ENCODE measurements at regions of chr1 and their contacts with region 1.

Region 1: GRCh38 chr1:28409090-28409489 is 39.5 kb downstream of the PHACTR4 start:
- DNase-seq: no peak
- ATAC-seq: no peak
- H3K4me3 ChIP-seq: no peak overlapping the region
- H3K27ac ChIP-seq: no peak overlapping the region
- H3K4me1 ChIP-seq: no peaks in the 10 kb centered on the region
- H3K27me3 ChIP-seq: no peaks in the 10 kb centered on the region
- CTCF ChIP-seq: no peak
- EP300 ChIP-seq: no peak
- POLR2A ChIP-seq: no peak
- RAD21 ChIP-seq: no peak

Region 2: GRCh38 chr1:28301471-28302174 is 107.5 kb before region 1 on chr1:
- CTCF ChIA-PET with region 1: no interaction called
- POLR2A ChIA-PET with region 1: no interaction called
- RAD21 ChIA-PET with region 1: no interaction called
- SMC1A ChIA-PET with region 1: no interaction called
- in situ Hi-C with region 1: no loop called
- intact Hi-C with region 1: no loop called
- DNase-seq: no peak
- ATAC-seq: no peak
- H3K4me3 ChIP-seq: no peak overlapping the region
- H3K27ac ChIP-seq: no peak overlapping the region
- H3K4me1 ChIP-seq: no peaks in the 10 kb centered on the region
- H3K27me3 ChIP-seq: no peaks in the 10 kb centered on the region
- CTCF ChIP-seq: no peak
- EP300 ChIP-seq: no peak
- POLR2A ChIP-seq: no peak
- RAD21 ChIP-seq: no peak

Region 3: DNA sequence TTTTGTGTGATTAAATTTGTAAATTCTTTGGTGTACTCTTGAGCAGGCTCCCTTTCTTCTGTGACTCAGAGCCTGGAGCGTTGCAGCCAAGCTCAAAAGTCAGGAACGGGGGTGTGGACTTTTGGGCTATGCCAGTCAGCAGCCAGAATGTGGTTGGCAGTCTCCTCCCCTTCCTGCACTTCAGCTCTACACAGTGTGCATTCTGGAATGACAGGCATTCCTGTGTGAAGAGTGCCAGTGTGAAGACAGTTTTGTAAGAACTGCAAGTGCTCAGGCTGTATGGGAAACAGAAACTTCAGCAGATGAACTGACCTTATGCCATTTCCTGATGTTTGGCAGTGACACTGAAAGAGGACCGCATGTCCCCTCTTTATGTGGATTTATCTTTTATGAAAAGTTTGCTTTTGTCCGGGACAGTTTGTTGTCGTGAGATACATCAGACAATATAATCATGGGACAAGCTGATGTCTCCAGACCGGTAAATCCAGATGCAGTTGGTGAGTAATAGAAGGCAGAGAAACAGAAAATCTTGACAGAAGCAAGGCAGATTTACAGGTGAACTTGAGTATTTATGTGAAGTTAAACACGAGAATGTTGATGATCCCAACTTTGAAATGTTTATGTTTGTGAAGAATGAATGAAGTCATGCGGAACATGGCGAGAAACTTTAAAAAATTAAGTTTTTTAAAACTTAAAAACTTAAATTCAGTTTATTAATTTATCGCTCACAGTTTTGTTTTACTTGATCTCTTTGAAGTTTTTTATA is 29.0 kb after region 1 on chr1:
- CTCF ChIA-PET with region 1: interaction called, 7 read pairs
- POLR2A ChIA-PET with region 1: interaction called, 12 read pairs
- RAD21 ChIA-PET with region 1: interaction called, 4 read pairs
- SMC1A ChIA-PET with region 1: interaction called, 13 read pairs
- in situ Hi-C with region 1: no loop called
- intact Hi-C with region 1: no loop called
- DNase-seq: no peak
- ATAC-seq: peak; percentile 71
- H3K4me3 ChIP-seq: peak overlapping the region; percentile 51; the same call in 1 of the 2 replicates
- H3K27ac ChIP-seq: peak overlapping the region; percentile 54
- H3K4me1 ChIP-seq: peaks cover 6% of the 10 kb centered on the region
- H3K27me3 ChIP-seq: no peaks in the 10 kb centered on the region
- CTCF ChIP-seq: no peak
- EP300 ChIP-seq: no peak
- POLR2A ChIP-seq: peak; percentile 38; the same call in 1 of the 2 replicates
- RAD21 ChIP-seq: no peak

Region 4: DNA sequence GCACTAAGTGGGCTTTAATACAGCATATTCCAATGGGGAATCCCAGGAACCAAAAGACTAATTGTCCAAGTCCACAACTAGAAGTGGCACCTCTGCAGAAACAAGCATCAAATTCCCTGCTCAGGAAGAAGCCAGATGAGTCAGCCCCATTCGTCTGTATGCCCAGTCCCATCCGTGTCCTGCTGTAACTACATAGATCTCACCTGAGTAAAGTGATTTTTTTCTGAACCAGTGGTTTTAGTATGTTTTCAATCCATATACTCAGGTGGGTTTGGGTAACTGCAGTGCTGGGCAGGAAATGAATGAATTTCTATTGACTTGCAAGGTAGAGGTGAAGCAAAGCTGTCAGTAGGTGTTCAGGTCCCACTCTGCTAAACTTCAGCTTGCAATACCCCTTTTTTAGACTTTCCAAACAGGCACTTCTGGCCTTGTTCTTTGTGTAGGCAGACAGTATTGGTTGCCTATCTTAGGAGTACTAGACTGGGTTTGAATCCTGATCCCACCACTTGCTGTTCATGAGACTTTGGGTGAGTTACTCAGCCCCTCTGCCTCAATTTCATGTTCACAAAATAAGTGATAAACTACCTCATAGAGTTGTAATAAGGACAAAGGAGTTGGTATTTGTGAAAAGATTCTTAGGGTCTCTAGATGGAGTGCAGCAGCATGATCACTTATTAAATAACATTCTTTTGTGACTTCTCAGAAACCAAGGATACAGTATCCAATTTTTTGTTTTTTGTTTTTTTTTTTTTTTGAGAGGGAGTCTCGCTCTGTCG is 101.8 kb after region 1 on chr1:
- CTCF ChIA-PET with region 1: interaction called, 11 read pairs
- POLR2A ChIA-PET with region 1: interaction called, 7 read pairs
- RAD21 ChIA-PET with region 1: interaction called, 6 read pairs
- SMC1A ChIA-PET with region 1: interaction called, 5 read pairs
- in situ Hi-C with region 1: no loop called
- intact Hi-C with region 1: no loop called
- DNase-seq: no peak
- ATAC-seq: peak; percentile 11
- H3K4me3 ChIP-seq: peak overlapping the region; percentile 84
- H3K27ac ChIP-seq: peak overlapping the region; percentile 94
- H3K4me1 ChIP-seq: peaks cover 10% of the 10 kb centered on the region
- H3K27me3 ChIP-seq: no peaks in the 10 kb centered on the region
- CTCF ChIP-seq: no peak
- EP300 ChIP-seq: no peak
- POLR2A ChIP-seq: peak; percentile 67
- RAD21 ChIP-seq: no peak